AG04449 (cell line): ENCODE measurements at regions of chr10 and their contacts with region 1.

Region 1: GRCh38 chr10:90787393-90788198 is 70.2 kb downstream of the HTR7 start:
- DNase-seq: no peak
- H3K4me3 ChIP-seq: no peak overlapping the region
- CTCF ChIP-seq: peak; percentile 68

Region 2: GRCh38 chr10:89793649-89794254 is 993.8 kb before region 1 on chr10:
- CTCF ChIA-PET with region 1: interaction called, 11 read pairs
- POLR2A ChIA-PET with region 1: no interaction called
- DNase-seq: peak; percentile 19
- H3K4me3 ChIP-seq: no peak overlapping the region
- CTCF ChIP-seq: peak; percentile 62

Region 3: GRCh38 chr10:90288391-90288933 is 499.1 kb before region 1 on chr10:
- CTCF ChIA-PET with region 1: interaction called, 13 read pairs
- POLR2A ChIA-PET with region 1: no interaction called
- DNase-seq: no peak
- H3K4me3 ChIP-seq: no peak overlapping the region
- CTCF ChIP-seq: peak; percentile 31

Region 4: DNA sequence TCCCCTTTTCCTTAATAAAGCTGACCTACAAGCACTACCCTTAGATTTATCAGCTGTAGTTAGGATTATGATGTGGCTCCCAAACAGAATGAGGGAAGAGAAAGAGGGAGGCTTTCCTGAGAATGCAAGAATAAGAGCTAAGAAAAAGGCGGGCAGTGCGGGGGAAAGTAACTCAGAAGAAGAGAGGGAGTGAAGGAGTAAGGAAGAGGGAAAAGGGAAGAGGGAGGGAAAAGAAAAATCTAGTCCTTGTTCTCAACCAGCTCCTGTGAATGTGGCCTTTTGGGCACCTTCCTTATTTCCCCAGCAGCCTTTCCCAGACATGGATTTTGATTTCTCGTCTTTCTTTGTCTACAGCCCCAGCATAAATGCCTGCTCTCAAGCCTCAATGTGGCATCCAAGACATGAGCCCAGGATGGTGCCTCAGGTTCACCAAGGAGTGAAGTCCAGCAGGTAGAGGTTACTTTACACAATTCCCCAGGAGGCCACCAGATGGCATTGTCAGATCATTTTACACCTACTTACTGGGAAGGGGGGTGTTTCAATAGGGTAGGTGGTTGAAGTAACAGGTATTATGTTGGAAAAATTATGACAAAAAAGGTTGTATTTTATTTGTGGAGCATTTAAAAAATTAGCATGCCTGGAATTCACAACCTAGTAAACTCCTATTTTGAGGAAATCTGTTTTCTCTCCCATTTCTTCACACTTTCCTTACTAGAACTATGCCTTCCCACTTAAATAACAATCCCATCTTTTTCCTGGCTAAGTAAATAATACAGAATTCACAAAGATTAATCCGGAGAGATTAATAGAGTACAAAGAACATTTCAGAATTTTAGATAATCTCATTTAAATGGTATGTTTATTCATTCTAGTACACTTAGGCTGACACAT is 36.2 kb before region 1 on chr10:
- CTCF ChIA-PET with region 1: interaction called, 18 read pairs
- POLR2A ChIA-PET with region 1: no interaction called
- DNase-seq: no peak
- H3K4me3 ChIP-seq: no peak overlapping the region
- CTCF ChIP-seq: peak; percentile 63

Region 5: GRCh38 chr10:90798482-90798881 is 10.9 kb after region 1 on chr10:
- CTCF ChIA-PET with region 1: interaction called, 11 read pairs
- POLR2A ChIA-PET with region 1: no interaction called
- DNase-seq: no peak
- H3K4me3 ChIP-seq: no peak overlapping the region
- CTCF ChIP-seq: no peak

Region 6: GRCh38 chr10:90862908-90863514 is 75.4 kb after region 1 on chr10:
- CTCF ChIA-PET with region 1: interaction called, 29 read pairs
- POLR2A ChIA-PET with region 1: no interaction called
- DNase-seq: no peak
- H3K4me3 ChIP-seq: no peak overlapping the region
- CTCF ChIP-seq: peak; percentile 60

Region 7: DNA sequence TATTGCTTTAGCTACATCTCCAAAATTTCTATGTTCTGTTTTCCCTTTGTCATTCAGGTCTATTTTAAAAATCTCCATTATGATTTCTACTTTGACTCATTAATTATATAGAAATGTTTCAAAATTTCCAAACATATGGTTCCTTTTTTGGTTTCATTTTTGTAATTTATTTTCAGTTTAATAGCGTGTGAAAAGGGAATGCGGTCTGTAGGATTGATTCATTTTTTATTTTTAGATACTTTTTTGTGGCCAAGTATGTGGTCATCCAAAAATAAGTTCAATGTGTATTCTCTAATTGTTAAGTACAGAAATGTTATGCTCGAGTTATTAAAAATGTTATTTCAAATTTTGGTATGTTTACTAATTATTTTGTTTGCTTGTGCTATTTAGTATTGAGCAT is 205.7 kb after region 1 on chr10:
- CTCF ChIA-PET with region 1: no interaction called
- POLR2A ChIA-PET with region 1: no interaction called
- DNase-seq: no peak
- H3K4me3 ChIP-seq: no peak overlapping the region
- CTCF ChIP-seq: no peak

Region 8: GRCh38 chr10:91034494-91035159 is 247.0 kb after region 1 on chr10:
- CTCF ChIA-PET with region 1: no interaction called
- POLR2A ChIA-PET with region 1: no interaction called
- DNase-seq: no peak
- H3K4me3 ChIP-seq: no peak overlapping the region
- CTCF ChIP-seq: no peak